A673 (cell line): ENCODE measurements at regions of chr2 and their contacts with region 1.

Region 1: GRCh38 chr2:172102391-172103278 is at the start of gene DLX2:
- DNase-seq: peak; percentile 98
- H3K4me3 ChIP-seq: peak within 1 kb of the TSS; percentile 81
- H3K27ac ChIP-seq: peak within 1 kb of the TSS; percentile 96
- H3K4me1 ChIP-seq: peaks cover 50% of the 10 kb centered on the region
- H3K27me3 ChIP-seq: no peaks in the 10 kb centered on the region
- CTCF ChIP-seq: peak; percentile 9; the same call in 1 of the 2 replicates
- total RNA-seq, gene DLX2: 18.3 and 20.4 TPM in 2 replicates

Region 2: DNA sequence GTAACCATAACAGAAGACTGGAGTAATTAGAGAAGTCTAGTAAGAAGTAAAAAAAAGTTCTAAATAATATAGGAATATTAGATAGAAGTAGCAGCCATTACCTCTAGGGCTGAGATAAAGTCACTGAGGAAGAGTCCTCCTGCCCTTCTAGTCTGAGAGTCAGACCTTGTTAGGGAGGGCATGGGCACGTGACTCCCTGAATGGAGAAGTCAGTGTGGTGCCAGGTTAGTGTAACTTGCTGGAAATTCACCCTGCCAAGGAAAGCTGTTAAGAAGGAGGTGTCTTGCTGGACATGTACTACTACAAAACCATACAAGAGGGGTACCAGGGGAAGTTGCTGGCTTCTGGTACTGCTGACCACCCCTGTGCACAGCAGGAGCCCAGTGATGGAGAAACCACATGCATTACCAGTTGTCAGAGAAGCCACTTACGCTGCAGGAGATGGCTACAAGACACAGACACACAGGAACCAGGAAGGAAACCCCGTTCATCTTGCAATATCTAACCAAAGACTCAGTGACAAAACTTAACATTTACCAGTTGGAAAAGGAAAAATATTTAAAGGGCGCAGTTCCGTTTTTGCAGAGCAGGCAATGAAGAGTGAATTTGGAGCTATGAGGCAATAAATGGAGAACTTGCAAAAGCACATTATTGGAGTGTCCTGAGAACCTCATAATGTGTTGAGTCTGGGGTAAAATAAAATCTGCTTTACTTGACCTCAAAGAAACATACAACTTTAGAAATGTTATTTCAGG is 864.7 kb before region 1 on chr2:
- CTCF ChIA-PET with region 1: no interaction called
- POLR2A ChIA-PET with region 1: no interaction called
- intact Hi-C with region 1: no loop called
- DNase-seq: no peak
- H3K4me3 ChIP-seq: no peak overlapping the region
- H3K27ac ChIP-seq: no peak overlapping the region
- H3K4me1 ChIP-seq: no peaks in the 10 kb centered on the region
- H3K27me3 ChIP-seq: no peaks in the 10 kb centered on the region
- CTCF ChIP-seq: no peak

Region 3: GRCh38 chr2:171630812-171631626 is 471.6 kb before region 1 on chr2:
- CTCF ChIA-PET with region 1: no interaction called
- POLR2A ChIA-PET with region 1: no interaction called
- intact Hi-C with region 1: no loop called
- DNase-seq: peak; percentile 12
- H3K4me3 ChIP-seq: no peak overlapping the region
- H3K27ac ChIP-seq: no peak overlapping the region
- H3K4me1 ChIP-seq: no peaks in the 10 kb centered on the region
- H3K27me3 ChIP-seq: no peaks in the 10 kb centered on the region
- CTCF ChIP-seq: no peak

Region 4: GRCh38 chr2:171811245-171811628 is 291.4 kb before region 1 on chr2:
- CTCF ChIA-PET with region 1: interaction called, 11 read pairs
- POLR2A ChIA-PET with region 1: no interaction called
- intact Hi-C with region 1: loop called (anchors 2 kb)
- DNase-seq: peak; percentile 67
- H3K4me3 ChIP-seq: no peak overlapping the region
- H3K27ac ChIP-seq: no peak overlapping the region
- H3K4me1 ChIP-seq: peaks cover 18% of the 10 kb centered on the region
- H3K27me3 ChIP-seq: no peaks in the 10 kb centered on the region
- CTCF ChIP-seq: peak; percentile 64

Region 5: DNA sequence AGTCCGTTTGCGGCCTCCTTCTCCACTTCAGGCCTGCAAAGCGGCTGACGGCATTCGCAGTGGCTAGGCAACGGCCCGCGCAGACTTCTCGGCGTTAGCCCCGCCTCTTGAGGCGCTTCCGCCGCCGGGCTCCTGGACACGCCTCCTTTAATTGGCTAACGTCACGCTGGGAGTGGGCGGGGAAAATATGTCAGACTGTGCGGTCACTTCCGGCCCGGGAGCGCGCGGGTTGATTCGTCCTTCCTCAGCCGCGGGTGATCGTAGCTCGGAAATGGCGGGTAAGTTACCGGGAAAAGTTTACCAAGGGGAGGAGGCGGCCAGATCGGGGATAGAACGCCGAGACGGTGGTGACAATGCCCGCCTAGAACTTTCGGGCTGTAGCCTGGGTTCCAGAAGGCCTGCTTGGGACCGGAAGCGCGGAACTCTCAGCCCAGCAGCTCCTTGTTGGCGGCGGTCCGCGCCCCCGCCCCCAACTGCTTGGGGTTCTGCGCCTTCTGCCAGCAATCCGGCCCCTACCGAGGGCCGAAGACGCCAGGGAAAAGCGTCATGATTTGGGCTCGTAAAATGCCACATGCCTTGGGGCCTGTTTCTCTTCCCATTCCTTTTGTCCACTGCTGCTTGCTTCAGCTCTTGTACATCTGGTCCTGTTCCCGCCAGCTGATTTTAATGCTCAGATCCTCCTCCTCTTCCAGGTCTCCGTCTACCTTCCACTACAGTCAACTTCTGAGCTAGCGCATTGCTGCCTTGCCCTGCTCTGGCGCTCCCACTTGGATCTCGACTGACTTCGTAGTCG is 180.2 kb before region 1 on chr2 and contains the start of gene HAT1:
- CTCF ChIA-PET with region 1: interaction called, 9 read pairs
- POLR2A ChIA-PET with region 1: no interaction called
- intact Hi-C with region 1: loop called (anchors 5 kb)
- DNase-seq: peak; percentile 98
- H3K4me3 ChIP-seq: peak within 1 kb of the TSS; percentile 90
- H3K27ac ChIP-seq: peak within 1 kb of the TSS; percentile 98
- H3K4me1 ChIP-seq: peaks cover 11% of the 10 kb centered on the region
- H3K27me3 ChIP-seq: no peaks in the 10 kb centered on the region
- CTCF ChIP-seq: no peak
- total RNA-seq, gene HAT1: 109 and 115 TPM in 2 replicates

Region 6: GRCh38 chr2:171939743-171940071 is 162.9 kb before region 1 on chr2:
- CTCF ChIA-PET with region 1: interaction called, 4 read pairs
- POLR2A ChIA-PET with region 1: no interaction called
- intact Hi-C with region 1: loop called (anchors 5 kb)
- DNase-seq: no peak
- H3K4me3 ChIP-seq: no peak overlapping the region
- H3K27ac ChIP-seq: no peak overlapping the region
- H3K4me1 ChIP-seq: peaks cover 10% of the 10 kb centered on the region
- H3K27me3 ChIP-seq: no peaks in the 10 kb centered on the region
- CTCF ChIP-seq: no peak

Region 7: GRCh38 chr2:171957061-171957460 is 145.6 kb before region 1 on chr2:
- CTCF ChIA-PET with region 1: no interaction called
- POLR2A ChIA-PET with region 1: no interaction called
- intact Hi-C with region 1: loop called (anchors 5 kb)
- DNase-seq: peak; percentile 71
- H3K4me3 ChIP-seq: no peak overlapping the region
- H3K27ac ChIP-seq: peak overlapping the region; percentile 16
- H3K4me1 ChIP-seq: peaks cover 10% of the 10 kb centered on the region
- H3K27me3 ChIP-seq: no peaks in the 10 kb centered on the region
- CTCF ChIP-seq: peak; percentile 53